ENCODE measurements at regions of chr12 and their contacts with region 1.

Region 1: GRCh38 chr12:6662906-6663742 is at the start of gene ING4:
- DNase-seq: peak; percentile 98
- ATAC-seq: peak; percentile 100
- H3K4me3 ChIP-seq: peak within 1 kb of the TSS; percentile 89 to 91
- H3K27ac ChIP-seq: peak within 1 kb of the TSS in 1 of 2 donors; percentile 58
- H3K4me1 ChIP-seq: no peaks in the 10 kb centered on the region
- H3K27me3 ChIP-seq: no peaks in the 10 kb centered on the region
- total RNA-seq, gene ING4: 19.7 to 43.3 TPM

Region 2: GRCh38 chr12:5856692-5857091 is 806.4 kb before region 1 on chr12:
- intact Hi-C with region 1: no loop called
- DNase-seq: no peak
- ATAC-seq: no peak
- H3K4me3 ChIP-seq: no peak overlapping the region
- H3K27ac ChIP-seq: no peak overlapping the region
- H3K4me1 ChIP-seq: no peaks in the 10 kb centered on the region
- H3K27me3 ChIP-seq: peaks cover 0 to 2% of the 10 kb centered on the region in 2 donors

Region 3: GRCh38 chr12:6567112-6567670 is 95.9 kb before region 1 on chr12:
- intact Hi-C with region 1: loop called in 1 of 2 experiments (anchors 2 kb)
- DNase-seq: no peak
- ATAC-seq: no peak
- H3K4me3 ChIP-seq: peak overlapping the region; percentile 15 to 36
- H3K27ac ChIP-seq: no peak overlapping the region
- H3K4me1 ChIP-seq: no peaks in the 10 kb centered on the region
- H3K27me3 ChIP-seq: no peaks in the 10 kb centered on the region

Region 4: GRCh38 chr12:6613776-6614512 is 49.2 kb before region 1 on chr12:
- intact Hi-C with region 1: loop called in 1 of 2 experiments (anchors 5 kb)
- DNase-seq: peak; percentile 95 to 96
- ATAC-seq: peak; percentile 93
- H3K4me3 ChIP-seq: no peak overlapping the region
- H3K27ac ChIP-seq: peak overlapping the region in 1 of 2 donors; percentile 89
- H3K4me1 ChIP-seq: peaks cover 2 to 3% of the 10 kb centered on the region in 2 donors
- H3K27me3 ChIP-seq: no peaks in the 10 kb centered on the region

Region 5: DNA sequence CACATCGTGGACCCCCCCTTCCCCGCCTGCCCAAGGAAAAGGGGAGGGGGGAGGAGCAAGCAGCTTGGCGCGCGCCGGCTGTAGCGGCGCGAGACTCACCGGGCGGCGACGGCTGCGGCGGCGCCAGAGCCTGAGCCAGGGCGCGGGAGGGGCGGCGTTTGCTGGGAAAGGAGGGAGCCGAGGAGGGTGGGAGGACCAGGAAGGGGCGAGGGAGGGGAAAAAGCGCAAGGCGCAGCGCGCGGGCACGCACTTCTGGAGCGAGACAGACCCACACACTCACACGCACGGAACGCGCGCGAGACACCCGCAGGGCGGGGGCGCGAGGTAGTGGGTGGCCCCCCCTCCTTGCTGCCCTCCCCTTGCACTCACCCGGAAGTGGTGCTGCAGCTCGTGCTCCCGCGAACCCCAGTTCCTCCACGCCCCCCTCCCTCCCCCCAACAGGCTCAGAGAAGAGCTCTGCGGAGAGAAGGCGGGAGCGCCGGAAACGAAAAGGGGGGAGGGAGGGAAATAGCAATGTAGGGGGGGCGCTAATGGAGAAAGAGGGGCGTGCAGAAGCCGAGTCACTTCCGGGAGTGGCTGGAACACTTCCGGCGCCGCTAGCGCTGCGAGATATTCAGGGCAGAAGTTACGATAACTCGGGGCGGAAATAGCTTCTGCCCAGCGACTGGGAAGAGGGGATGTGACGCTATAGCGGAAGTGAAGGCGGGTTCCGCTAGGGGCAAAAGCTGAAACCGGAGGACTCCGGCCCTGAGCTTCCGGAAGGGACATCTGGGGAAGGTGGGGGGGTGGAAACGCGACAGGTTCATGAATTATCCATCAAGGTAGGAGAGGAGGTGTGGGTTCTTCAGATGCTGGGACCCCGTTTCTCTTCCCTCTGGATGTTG is 26.1 kb after region 1 on chr12 and contains the start of gene ZNF384:
- intact Hi-C with region 1: loop called in 1 of 2 experiments (anchors 1 kb)
- DNase-seq: peak; percentile 98
- ATAC-seq: peak; percentile 95
- H3K4me3 ChIP-seq: peak within 1 kb of the TSS; percentile 71 to 81
- H3K27ac ChIP-seq: peak within 1 kb of the TSS; percentile 70 to 79
- H3K4me1 ChIP-seq: no peaks in the 10 kb centered on the region
- H3K27me3 ChIP-seq: no peaks in the 10 kb centered on the region
- total RNA-seq, gene ZNF384: 54.4 to 66.7 TPM

Measured in aorta (tissue), 5 donors.